ENCODE measurements at regions of chr1 and their contacts with region 1.

Region 1: GRCh38 chr1:58546520-58547308 is at the start of gene OMA1:
- DNase-seq: peak; percentile 98
- H3K4me3 Mint-ChIP-seq: peak within 1 kb of the TSS; percentile 90
- H3K27ac Mint-ChIP-seq: peak within 1 kb of the TSS; percentile 95
- H3K4me1 Mint-ChIP-seq: peaks cover 18% of the 10 kb centered on the region
- H3K27me3 Mint-ChIP-seq: no peaks in the 10 kb centered on the region
- total RNA-seq, gene OMA1: 12.0 to 13.0 TPM

Region 2: DNA sequence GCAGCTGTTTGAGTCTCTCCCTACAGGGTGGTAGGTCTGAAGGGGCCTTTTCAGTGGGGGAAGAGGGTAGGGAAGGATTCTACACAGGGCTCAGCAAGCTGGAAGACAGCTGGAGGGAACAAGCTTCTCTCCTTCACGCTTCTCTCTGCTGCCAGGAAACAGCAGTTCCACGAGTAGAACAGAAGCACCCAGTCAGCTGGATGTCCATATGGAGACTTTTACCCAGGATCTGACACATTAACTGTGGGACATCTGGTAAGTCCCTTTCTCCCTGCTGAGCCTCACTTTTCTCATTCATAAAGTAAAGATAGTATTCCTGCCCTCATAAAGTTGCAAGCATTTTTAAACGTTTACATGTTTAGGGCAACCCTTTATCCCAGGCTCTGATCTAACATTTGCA is 280.5 kb before region 1 on chr1:
- CTCF ChIA-PET with region 1: no interaction called
- POLR2A ChIA-PET with region 1: no interaction called
- intact Hi-C with region 1: no loop called
- DNase-seq: no peak
- H3K4me3 Mint-ChIP-seq: no peak overlapping the region
- H3K27ac Mint-ChIP-seq: no peak overlapping the region
- H3K4me1 Mint-ChIP-seq: no peaks in the 10 kb centered on the region
- H3K27me3 Mint-ChIP-seq: no peaks in the 10 kb centered on the region

Region 3: DNA sequence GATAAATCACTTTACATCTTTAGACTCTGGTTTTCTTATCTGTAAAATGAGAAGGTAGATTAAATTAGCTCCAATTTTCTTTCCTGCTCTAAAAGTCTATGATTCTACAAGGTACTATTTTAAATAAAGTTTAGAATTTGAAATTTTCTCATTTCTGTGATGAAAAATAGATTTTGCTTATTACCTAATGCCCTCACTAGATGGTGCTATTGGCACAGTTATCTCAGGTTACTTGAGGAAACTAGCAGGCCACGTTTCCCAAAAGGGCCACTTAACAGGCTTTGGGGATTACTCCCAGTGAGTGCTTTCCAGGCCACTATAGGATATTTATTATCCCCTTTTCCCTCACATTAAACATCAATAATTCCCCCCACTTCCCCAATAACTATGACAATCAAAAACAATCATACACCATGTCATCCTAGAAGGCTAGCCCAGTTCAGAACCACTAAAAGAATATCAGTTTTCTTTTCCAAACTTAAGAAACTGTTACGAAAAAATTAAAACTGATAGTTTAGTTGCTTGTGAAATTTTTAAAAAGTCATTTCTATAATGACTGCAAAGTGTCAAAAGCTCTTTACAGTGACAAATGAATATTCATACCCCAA is 30.8 kb before region 1 on chr1:
- CTCF ChIA-PET with region 1: interaction called, 95 read pairs
- POLR2A ChIA-PET with region 1: interaction called, 4 read pairs
- intact Hi-C with region 1: loop called (anchors 1 kb)
- DNase-seq: peak; percentile 16
- H3K4me3 Mint-ChIP-seq: no peak overlapping the region
- H3K27ac Mint-ChIP-seq: peak overlapping the region; percentile 23
- H3K4me1 Mint-ChIP-seq: peaks cover 3% of the 10 kb centered on the region
- H3K27me3 Mint-ChIP-seq: no peaks in the 10 kb centered on the region

Region 4: GRCh38 chr1:58573705-58574591 is 27.2 kb after region 1 on chr1:
- CTCF ChIA-PET with region 1: interaction called, 4 read pairs
- POLR2A ChIA-PET with region 1: no interaction called
- intact Hi-C with region 1: loop called (anchors 1 kb)
- DNase-seq: peak; percentile 78
- H3K4me3 Mint-ChIP-seq: no peak overlapping the region
- H3K27ac Mint-ChIP-seq: peak overlapping the region; percentile 43
- H3K4me1 Mint-ChIP-seq: peaks cover 40% of the 10 kb centered on the region
- H3K27me3 Mint-ChIP-seq: peaks cover 57% of the 10 kb centered on the region

Region 5: GRCh38 chr1:58688931-58689566 is 142.3 kb after region 1 on chr1:
- CTCF ChIA-PET with region 1: no interaction called
- POLR2A ChIA-PET with region 1: no interaction called
- intact Hi-C with region 1: no loop called
- DNase-seq: no peak
- H3K4me3 Mint-ChIP-seq: no peak overlapping the region
- H3K27ac Mint-ChIP-seq: no peak overlapping the region
- H3K4me1 Mint-ChIP-seq: peaks cover 13% of the 10 kb centered on the region
- H3K27me3 Mint-ChIP-seq: no peaks in the 10 kb centered on the region

Region 6: DNA sequence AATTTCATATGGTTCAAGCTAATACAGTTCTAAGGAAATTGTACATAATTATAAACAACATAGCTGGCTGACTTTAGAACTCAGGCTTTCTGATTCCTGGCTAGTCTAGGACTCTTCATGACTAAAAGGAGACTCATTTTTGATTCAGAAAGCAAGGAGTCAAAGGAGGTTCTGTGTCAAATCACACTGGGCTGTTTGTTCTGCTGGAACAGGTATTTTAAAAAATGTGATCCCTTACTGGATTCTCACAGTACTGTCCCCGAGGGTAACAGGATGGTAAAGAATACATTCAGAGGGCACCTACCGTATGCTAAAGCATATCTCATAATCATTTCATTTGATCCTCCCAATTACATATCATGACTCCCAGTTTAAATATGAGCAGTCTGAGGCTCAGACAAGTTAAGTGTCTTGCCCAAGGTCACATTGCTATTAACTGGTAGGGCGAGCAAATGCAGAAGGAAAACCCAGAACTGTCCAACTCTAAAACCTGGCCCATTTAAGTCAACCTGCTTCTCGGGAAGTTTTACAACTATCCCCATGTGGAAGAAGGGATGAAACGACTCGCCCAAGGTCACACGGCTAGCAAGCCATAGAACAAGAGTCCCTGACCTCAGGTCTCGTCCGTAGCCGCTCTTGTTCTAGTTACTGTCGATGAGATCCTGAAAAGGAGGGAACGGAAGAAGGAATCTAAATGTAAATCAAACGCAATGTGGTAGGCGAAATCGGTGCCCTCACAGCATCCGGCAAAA is 152.5 kb after region 1 on chr1:
- CTCF ChIA-PET with region 1: no interaction called
- POLR2A ChIA-PET with region 1: no interaction called
- intact Hi-C with region 1: loop called (anchors 1 kb)
- DNase-seq: no peak
- H3K4me3 Mint-ChIP-seq: peak overlapping the region; percentile 95
- H3K27ac Mint-ChIP-seq: peak overlapping the region; percentile 92
- H3K4me1 Mint-ChIP-seq: peaks cover 15% of the 10 kb centered on the region
- H3K27me3 Mint-ChIP-seq: no peaks in the 10 kb centered on the region

Region 7: DNA sequence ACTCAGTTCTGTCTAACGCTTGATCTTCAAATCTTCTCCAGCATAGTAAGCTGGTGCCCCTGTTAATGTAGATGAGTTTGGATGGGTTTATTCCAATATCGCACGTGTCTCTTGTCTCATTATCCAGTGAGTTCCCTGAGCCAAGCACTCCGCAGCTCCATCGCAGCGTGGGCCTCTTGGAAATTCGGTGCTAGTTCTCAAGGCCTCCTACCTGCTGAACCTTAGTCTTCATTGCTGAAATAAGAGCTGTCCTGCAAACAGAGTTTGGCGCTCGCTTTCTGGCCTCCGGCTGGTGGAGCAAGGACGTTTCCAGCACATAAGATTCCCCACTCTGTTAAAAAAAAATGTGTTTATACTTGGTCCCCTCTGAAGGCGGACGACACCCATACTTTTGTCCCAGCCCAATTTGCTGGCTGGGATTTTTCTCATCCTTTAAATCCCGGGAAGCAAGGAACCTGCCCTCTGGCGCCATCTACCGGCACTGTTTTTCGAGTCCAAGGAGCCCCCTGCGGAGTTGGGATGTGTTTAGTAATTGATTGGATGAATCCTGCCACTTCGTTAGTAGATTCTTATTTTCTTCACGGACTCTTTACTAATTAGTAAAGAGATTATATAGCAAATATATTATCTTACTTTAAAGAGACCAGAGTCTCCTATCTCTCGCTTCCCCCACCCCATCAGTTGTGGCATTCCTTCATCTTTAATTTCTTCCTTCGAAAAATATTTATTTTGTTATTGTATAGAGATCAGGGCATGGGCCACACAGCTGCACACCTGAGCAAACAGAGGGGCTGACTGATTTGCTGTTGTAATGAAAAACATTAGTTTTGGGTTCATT is 222.5 kb after region 1 on chr1:
- CTCF ChIA-PET with region 1: no interaction called
- POLR2A ChIA-PET with region 1: no interaction called
- intact Hi-C with region 1: no loop called
- DNase-seq: peak; percentile 57
- H3K4me3 Mint-ChIP-seq: no peak overlapping the region
- H3K27ac Mint-ChIP-seq: no peak overlapping the region
- H3K4me1 Mint-ChIP-seq: peaks cover 7% of the 10 kb centered on the region
- H3K27me3 Mint-ChIP-seq: peaks cover 2% of the 10 kb centered on the region

Measured in activated CD4-positive, alpha-beta memory T cell treated with anti-CD3 and anti-CD28 coated beads for 36 hours (primary cell).